HCT116 (cell line): ENCODE measurements at regions of chr12 and their contacts with region 1.

Region 1: GRCh38 chr12:109385339-109386067 is 37.8 kb downstream of the MYO1H start:
- DNase-seq: peak; percentile 51
- ATAC-seq: peak; percentile 78
- H3K4me3 ChIP-seq: peak overlapping the region in 1 of 2 experiments; percentile 19; a peak in 2 of 4 replicates
- H3K27ac ChIP-seq: no peak overlapping the region
- H3K4me1 ChIP-seq: peaks cover 5 to 7% of the 10 kb centered on the region in 2 experiments; a peak in 3 of 4 replicates
- H3K27me3 ChIP-seq: no peaks in the 10 kb centered on the region
- CTCF ChIP-seq: peak; percentile 42 to 96 (median 64); a peak in 5 of 6 replicates
- POLR2A ChIP-seq: no peak
- RAD21 ChIP-seq: peak; percentile 96

Region 2: DNA sequence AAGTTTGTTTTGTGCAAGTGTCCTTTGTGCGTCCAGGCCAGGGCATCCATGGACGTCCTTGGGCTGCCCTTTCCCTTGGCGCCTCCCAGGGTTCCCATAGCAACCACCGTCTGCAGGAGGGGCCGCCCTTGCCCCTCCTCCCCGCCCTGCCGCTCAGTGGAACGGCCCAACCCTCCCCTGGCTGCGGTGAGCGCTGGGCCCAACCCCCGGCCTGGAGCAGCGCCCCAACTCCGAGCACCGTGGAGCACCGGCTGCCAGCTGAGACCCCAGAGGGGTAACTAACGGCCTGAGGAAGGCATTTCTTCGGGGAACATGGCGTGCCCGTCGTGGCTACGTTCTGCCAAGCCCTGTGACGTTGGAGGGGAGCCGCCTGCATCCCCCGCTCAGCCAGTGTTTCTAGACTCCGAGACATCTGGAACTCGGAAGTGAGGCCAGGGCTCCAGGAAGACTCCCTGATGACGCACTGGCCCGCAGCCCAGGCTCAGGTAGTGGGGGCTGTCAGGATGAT is 274.5 kb before region 1 on chr12:
- CTCF ChIA-PET with region 1: interaction called, 44 read pairs
- POLR2A ChIA-PET with region 1: interaction called, 3 read pairs
- RAD21 ChIA-PET with region 1: interaction called in 1 of 2 experiments, 4 read pairs
- intact Hi-C with region 1: loop called (anchors 2 kb)
- DNase-seq: no peak
- ATAC-seq: peak; percentile 15; the same call in 1 of the 2 replicates
- H3K4me3 ChIP-seq: no peak overlapping the region
- H3K27ac ChIP-seq: no peak overlapping the region
- H3K4me1 ChIP-seq: no peaks in the 10 kb centered on the region
- H3K27me3 ChIP-seq: no peaks in the 10 kb centered on the region
- CTCF ChIP-seq: no peak
- POLR2A ChIP-seq: no peak
- RAD21 ChIP-seq: no peak

Region 3: GRCh38 chr12:109134186-109134917 is 251.2 kb before region 1 on chr12:
- CTCF ChIA-PET with region 1: interaction called, 8 read pairs
- POLR2A ChIA-PET with region 1: no interaction called
- RAD21 ChIA-PET with region 1: no interaction called
- intact Hi-C with region 1: loop called (anchors 1 kb)
- DNase-seq: peak; percentile 27
- ATAC-seq: peak; percentile 83
- H3K4me3 ChIP-seq: no peak overlapping the region
- H3K27ac ChIP-seq: no peak overlapping the region
- H3K4me1 ChIP-seq: peaks cover 5 to 12% of the 10 kb centered on the region in 2 experiments; a peak in 3 of 4 replicates
- H3K27me3 ChIP-seq: no peaks in the 10 kb centered on the region
- CTCF ChIP-seq: peak; percentile 50 to 79 (median 79); a peak in 5 of 6 replicates
- POLR2A ChIP-seq: no peak
- RAD21 ChIP-seq: peak; percentile 55

Region 4: DNA sequence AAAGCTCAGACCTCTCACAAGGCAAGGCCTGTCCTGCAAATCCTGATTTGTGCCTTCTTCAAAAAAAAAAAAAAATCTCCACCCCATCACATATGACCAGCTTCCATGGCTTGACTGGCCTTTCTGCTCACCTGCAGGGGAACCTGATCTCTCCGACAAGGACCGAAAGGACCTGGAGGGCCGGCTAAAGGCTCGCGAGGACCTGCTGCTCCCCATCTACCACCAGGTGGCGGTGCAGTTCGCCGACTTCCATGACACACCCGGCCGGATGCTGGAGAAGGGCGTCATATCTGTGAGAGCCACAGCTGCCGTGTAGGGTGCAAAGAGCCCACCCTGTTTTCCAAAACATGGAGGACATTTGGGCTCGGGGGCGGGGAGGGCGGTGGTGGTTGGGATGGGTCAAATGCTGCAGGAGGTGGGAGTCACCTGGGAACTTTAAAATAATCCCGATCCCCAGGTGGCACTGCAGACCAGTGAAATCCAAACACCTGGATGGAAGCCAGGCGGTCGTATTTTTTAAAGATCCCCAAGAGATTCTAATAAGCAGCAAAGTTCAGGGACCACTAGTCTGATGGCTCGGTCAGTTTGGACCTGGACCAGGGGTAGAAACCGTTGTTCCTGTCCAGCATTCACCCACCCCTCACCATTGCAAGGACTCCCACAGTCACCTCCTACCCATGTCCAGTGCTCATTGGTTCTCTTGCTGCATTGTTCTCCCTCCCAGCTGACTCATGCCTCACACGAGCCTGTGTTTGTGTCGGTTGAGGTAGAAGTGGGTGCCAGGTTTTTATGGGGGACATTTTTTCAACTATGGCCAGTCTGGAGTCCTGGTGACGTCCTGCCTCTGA is 121.2 kb before region 1 on chr12:
- CTCF ChIA-PET with region 1: interaction called, 58 read pairs
- POLR2A ChIA-PET with region 1: no interaction called
- RAD21 ChIA-PET with region 1: interaction called, 4 to 5 read pairs
- intact Hi-C with region 1: loop called (anchors 1 kb)
- DNase-seq: peak; percentile 77
- ATAC-seq: peak; percentile 98
- H3K4me3 ChIP-seq: peak overlapping the region in 1 of 2 experiments; percentile 13; a peak in 1 of 4 replicates
- H3K27ac ChIP-seq: no peak overlapping the region
- H3K4me1 ChIP-seq: peaks cover 0 to 13% of the 10 kb centered on the region in 2 experiments; a peak in 2 of 4 replicates
- H3K27me3 ChIP-seq: no peaks in the 10 kb centered on the region
- CTCF ChIP-seq: peak; percentile 95 to 97 (median 95)
- POLR2A ChIP-seq: no peak
- RAD21 ChIP-seq: peak; percentile 88